ENCODE measurements at regions of chr12 and their contacts with region 1.

Region 1: DNA sequence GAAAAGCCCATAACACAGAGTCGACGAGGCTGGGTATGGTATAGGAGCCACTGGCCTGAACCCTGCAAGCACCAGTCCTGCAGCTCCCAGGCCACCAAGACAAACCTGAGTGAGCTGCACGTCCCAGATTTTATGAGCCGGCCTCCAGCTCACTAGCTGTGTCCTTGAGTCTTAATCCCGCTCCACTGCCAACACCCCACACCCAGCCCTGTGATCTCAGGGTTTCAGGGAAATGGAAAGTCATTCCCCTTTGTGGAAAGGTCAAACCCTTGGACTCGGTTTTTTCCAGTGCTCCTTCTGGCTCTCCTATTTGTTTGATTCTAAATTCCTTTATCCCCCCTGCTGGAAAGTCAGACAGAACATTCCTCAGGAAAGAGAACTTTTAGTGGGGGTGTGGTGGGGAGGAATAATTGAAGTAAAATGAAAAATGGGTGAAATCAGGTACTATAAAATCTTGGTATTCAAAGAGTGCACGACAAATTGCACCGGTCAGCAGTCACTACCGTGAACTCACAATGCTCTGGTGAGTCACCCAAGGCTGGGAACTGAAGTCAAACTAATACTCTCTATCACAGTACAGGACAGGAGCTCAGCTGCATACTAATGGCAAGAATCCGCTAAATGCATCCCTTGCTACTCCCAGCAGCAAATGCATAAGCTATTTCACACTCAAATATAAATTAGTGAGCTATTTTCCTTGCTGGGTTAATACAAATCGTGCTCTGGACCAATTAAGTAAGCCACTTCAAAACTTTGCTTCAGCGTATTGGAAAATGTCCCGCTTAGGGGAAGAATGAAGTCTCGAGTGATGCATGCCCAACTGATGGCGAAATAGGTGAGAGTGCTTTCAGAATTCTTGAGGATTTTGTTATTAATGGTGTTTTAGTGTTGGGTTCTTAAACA is 9.0 kb downstream of the PITPNM2 start:
- DNase-seq: peak; percentile 48 to 75
- H3K4me3 ChIP-seq: peak overlapping the region; percentile 31; the same call in 1 of the 2 replicates
- H3K27ac ChIP-seq: peak overlapping the region; percentile 81
- H3K4me1 ChIP-seq: peaks cover 45% of the 10 kb centered on the region
- H3K27me3 ChIP-seq: no peaks in the 10 kb centered on the region
- CTCF ChIP-seq: no peak

Region 2: GRCh38 chr12:123062681-123063486 is 79.0 kb before region 1 on chr12:
- CTCF ChIA-PET with region 1: no interaction called
- POLR2A ChIA-PET with region 1: no interaction called
- intact Hi-C with region 1: loop called (anchors 2 kb)
- DNase-seq: peak; percentile 88 to 97
- H3K4me3 ChIP-seq: no peak overlapping the region
- H3K27ac ChIP-seq: peak overlapping the region; percentile 90
- H3K4me1 ChIP-seq: peaks cover 42% of the 10 kb centered on the region
- H3K27me3 ChIP-seq: no peaks in the 10 kb centered on the region
- CTCF ChIP-seq: no peak

Measured in PC-9 (cell line).